Colonic mucosa (tissue), 4 donors: ENCODE measurements at regions of chr3 and their contacts with region 1.

Region 1: DNA sequence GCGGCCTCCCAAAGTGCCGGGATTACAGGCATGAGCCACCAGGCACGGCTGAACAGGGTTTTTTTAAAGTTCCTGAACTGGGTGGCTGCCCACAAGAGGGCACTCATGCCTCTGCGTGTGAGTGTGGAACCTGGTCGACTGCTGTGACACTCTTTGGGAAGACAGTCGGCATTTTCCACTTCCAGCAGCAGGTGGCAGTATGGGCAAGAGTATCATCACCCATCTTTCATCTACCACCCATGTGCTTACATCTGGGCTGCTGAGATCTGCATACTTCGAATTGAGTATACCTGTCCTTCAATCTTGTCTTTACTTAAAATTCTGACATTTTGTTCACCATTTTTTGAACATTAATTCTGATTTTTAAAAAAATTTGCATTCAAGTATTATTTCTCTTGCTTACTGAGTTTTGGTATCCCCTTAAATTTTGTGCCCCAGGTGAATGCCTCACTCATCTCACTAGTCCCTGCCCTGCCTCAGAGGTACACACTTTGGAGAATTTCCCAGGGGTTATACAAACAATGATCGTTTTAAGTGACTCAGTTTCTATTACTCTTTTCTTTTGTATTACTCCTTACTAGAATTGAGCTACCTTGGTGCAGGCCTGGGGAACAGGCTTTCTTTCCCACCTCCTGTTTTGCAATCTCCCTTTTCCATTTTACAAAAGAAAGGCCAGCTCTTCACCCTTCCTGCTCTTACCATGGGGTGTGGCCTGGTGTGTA is 11.8 kb downstream of the CLEC3B start:
- DNase-seq: peak; percentile 98
- H3K4me3 ChIP-seq: no peak overlapping the region
- H3K27ac ChIP-seq: no peak overlapping the region
- H3K4me1 ChIP-seq: peaks cover 8% of the 10 kb centered on the region
- H3K27me3 ChIP-seq: no peaks in the 10 kb centered on the region
- CTCF ChIP-seq: peak; percentile 90

Region 2: GRCh38 chr3:44529927-44530326 is 508.0 kb before region 1 on chr3:
- intact Hi-C with region 1: loop called (anchors 10 kb)
- DNase-seq: peak; percentile 42
- H3K4me3 ChIP-seq: no peak overlapping the region
- H3K27ac ChIP-seq: no peak overlapping the region
- H3K4me1 ChIP-seq: no peaks in the 10 kb centered on the region
- H3K27me3 ChIP-seq: no peaks in the 10 kb centered on the region
- CTCF ChIP-seq: no peak

Region 3: DNA sequence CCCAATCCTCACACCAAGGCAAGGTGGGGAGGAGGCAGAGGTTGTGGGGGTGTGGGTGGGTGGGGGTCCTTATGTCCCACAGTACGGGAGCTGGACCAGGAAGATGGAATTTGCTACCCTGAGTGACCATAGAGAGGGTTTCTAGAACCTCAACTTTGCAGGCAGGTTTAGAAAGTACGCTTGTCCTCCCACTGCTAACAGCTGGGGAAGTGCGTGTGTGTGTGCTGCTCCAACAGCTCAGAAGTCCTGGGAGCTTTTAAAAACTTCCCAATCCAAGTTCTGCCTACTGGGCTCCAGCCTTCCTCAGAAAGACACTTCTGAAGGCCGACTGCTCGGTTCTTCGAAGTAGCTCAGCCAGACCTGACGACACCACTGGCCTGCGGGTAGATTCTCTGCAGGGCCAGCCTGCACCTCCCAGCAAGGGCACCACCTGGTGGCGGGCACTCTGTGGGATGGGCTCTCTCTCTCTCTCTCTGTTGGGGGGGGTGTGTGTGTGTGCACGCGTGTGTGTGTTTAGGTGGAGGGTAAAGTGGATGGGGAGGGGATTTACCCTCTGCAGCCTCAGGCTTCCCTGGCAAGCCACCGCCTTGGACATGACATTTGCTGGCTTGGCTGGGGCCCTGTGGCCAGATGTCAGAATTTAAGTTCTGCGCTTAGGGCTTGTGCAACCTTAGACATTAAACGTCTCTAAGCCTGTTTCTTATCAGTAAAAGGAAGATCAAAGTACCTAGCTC is 172.6 kb after region 1 on chr3:
- intact Hi-C with region 1: loop called (anchors 2 kb)
- DNase-seq: peak; percentile 89
- H3K4me3 ChIP-seq: no peak overlapping the region
- H3K27ac ChIP-seq: no peak overlapping the region
- H3K4me1 ChIP-seq: no peaks in the 10 kb centered on the region
- H3K27me3 ChIP-seq: no peaks in the 10 kb centered on the region
- CTCF ChIP-seq: peak; percentile 72

Region 4: GRCh38 chr3:45499529-45499928 is 461.6 kb after region 1 on chr3:
- intact Hi-C with region 1: loop called (anchors 5 kb)
- DNase-seq: no peak
- H3K4me3 ChIP-seq: no peak overlapping the region
- H3K27ac ChIP-seq: no peak overlapping the region
- H3K4me1 ChIP-seq: no peaks in the 10 kb centered on the region
- H3K27me3 ChIP-seq: no peaks in the 10 kb centered on the region
- CTCF ChIP-seq: peak; percentile 26